ENCODE measurements at regions of chr22 and their contacts with region 1.

Region 1: GRCh38 chr22:33529424-33530113 is 390.7 kb downstream of the LARGE1 start:
- DNase-seq: no peak
- CTCF ChIP-seq: no peak

Region 2: GRCh38 chr22:33539902-33540751 is 10.6 kb after region 1 on chr22:
- CTCF ChIA-PET with region 1: interaction called, 14 read pairs
- POLR2A ChIA-PET with region 1: no interaction called
- DNase-seq: no peak
- CTCF ChIP-seq: no peak